IMR-90 (cell line): ENCODE measurements at regions of chr10 and their contacts with region 1.

Region 1: GRCh38 chr10:77865629-77866360 is 60.8 kb downstream of the DLG5 start:
- DNase-seq: no peak
- ATAC-seq: no peak
- H3K4me3 ChIP-seq: no peak overlapping the region
- H3K27ac ChIP-seq: no peak overlapping the region
- H3K4me1 ChIP-seq: peaks cover 7% of the 10 kb centered on the region; the same call in 1 of the 2 replicates
- H3K27me3 ChIP-seq: no peaks in the 10 kb centered on the region
- CTCF ChIP-seq: no peak
- POLR2A ChIP-seq: no peak
- RAD21 ChIP-seq: no peak

Region 2: GRCh38 chr10:77886795-77887355 is 21.1 kb after region 1 on chr10:
- CTCF ChIA-PET with region 1: no interaction called
- POLR2A ChIA-PET with region 1: no interaction called
- dilution Hi-C with region 1: no loop called
- in situ Hi-C with region 1: no loop called
- intact Hi-C with region 1: no loop called
- DNase-seq: no peak
- ATAC-seq: no peak
- H3K4me3 ChIP-seq: no peak overlapping the region
- H3K27ac ChIP-seq: peak overlapping the region; percentile 63; the same call in 1 of the 2 replicates
- H3K4me1 ChIP-seq: peaks cover 17% of the 10 kb centered on the region
- H3K27me3 ChIP-seq: no peaks in the 10 kb centered on the region
- CTCF ChIP-seq: no peak
- POLR2A ChIP-seq: no peak
- RAD21 ChIP-seq: no peak

Region 3: GRCh38 chr10:77932016-77932715 is 66.4 kb after region 1 on chr10:
- CTCF ChIA-PET with region 1: no interaction called
- POLR2A ChIA-PET with region 1: interaction called, 16 read pairs
- dilution Hi-C with region 1: no loop called
- in situ Hi-C with region 1: no loop called
- intact Hi-C with region 1: no loop called
- DNase-seq: no peak
- ATAC-seq: no peak
- H3K4me3 ChIP-seq: no peak overlapping the region
- H3K27ac ChIP-seq: no peak overlapping the region
- H3K4me1 ChIP-seq: peaks cover 2% of the 10 kb centered on the region; the same call in 1 of the 2 replicates
- H3K27me3 ChIP-seq: no peaks in the 10 kb centered on the region
- CTCF ChIP-seq: no peak
- POLR2A ChIP-seq: no peak
- RAD21 ChIP-seq: no peak